Gastrocnemius medialis (tissue), 4 donors: ENCODE measurements at regions of chr1 and their contacts with region 1.

Region 1: GRCh38 chr1:227437495-227438008 is 119.3 kb upstream of the CDC42BPA start:
- DNase-seq: no peak
- ATAC-seq: peak; percentile 87 to 90
- H3K4me3 ChIP-seq: peak overlapping the region; percentile 46 to 61 (median 52)
- H3K27ac ChIP-seq: peak overlapping the region in 2 of 4 donors; percentile 11 to 59
- H3K4me1 ChIP-seq: peaks cover 11 to 27% of the 10 kb centered on the region in 2 donors
- H3K27me3 ChIP-seq: no peaks in the 10 kb centered on the region
- CTCF ChIP-seq: peak; percentile 9 to 55 (median 45)
- POLR2A ChIP-seq: no peak

Region 2: GRCh38 chr1:226608699-226609505 is 828.6 kb before region 1 on chr1:
- in situ Hi-C with region 1: loop called in 1 of 4 experiments (anchors 25 kb)
- intact Hi-C with region 1: no loop called
- DNase-seq: peak; percentile 23 to 41
- ATAC-seq: peak; percentile 37 to 60
- H3K4me3 ChIP-seq: no peak overlapping the region
- H3K27ac ChIP-seq: peak overlapping the region in 1 of 4 donors; percentile 7
- H3K4me1 ChIP-seq: peaks cover under 1 to 1% of the 10 kb centered on the region in 2 donors
- H3K27me3 ChIP-seq: peaks cover 0 to 6% (median 0%) of the 10 kb centered on the region in 3 donors
- CTCF ChIP-seq: peak; percentile 55 to 82 (median 74)
- POLR2A ChIP-seq: no peak

Region 3: DNA sequence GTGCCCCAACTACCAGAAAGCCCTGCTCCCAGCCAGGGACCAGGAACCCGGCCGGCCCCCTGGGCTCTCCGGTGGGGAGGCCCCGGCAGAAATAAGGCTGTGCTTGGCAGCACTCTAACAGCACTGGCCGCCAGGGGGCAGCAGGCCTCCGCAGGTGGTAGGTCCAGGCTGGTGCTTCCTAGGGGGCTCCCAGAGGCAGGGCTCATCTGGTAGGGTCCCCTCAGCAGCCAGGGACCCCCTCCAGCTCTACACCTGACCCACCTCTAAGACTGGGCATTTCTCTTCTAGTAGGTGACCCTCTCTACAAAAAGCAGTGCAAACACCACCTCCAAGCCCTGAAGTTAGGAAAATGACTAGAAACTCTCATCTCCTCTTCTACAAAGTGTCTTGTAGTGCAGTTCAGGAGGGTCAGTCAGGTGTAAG is 803.4 kb before region 1 on chr1:
- in situ Hi-C with region 1: loop called in 1 of 4 experiments (anchors 25 kb)
- intact Hi-C with region 1: loop called (anchors 5 kb)
- DNase-seq: peak; percentile 56 to 75
- ATAC-seq: peak; percentile 64 to 75
- H3K4me3 ChIP-seq: no peak overlapping the region
- H3K27ac ChIP-seq: peak overlapping the region; percentile 46 to 71 (median 66)
- H3K4me1 ChIP-seq: peaks cover 33 to 41% of the 10 kb centered on the region in 2 donors
- H3K27me3 ChIP-seq: no peaks in the 10 kb centered on the region
- CTCF ChIP-seq: peak; percentile 90 to 98 (median 98)
- POLR2A ChIP-seq: no peak

Region 4: GRCh38 chr1:226990133-226990716 is 447.3 kb before region 1 on chr1:
- in situ Hi-C with region 1: no loop called
- intact Hi-C with region 1: loop called (anchors 10 kb)
- DNase-seq: peak; percentile 41 to 65
- ATAC-seq: peak; percentile 26 to 36
- H3K4me3 ChIP-seq: no peak overlapping the region
- H3K27ac ChIP-seq: peak overlapping the region; percentile 89 to 99 (median 99)
- H3K4me1 ChIP-seq: peaks cover 40 to 47% of the 10 kb centered on the region in 2 donors
- H3K27me3 ChIP-seq: no peaks in the 10 kb centered on the region
- CTCF ChIP-seq: no peak
- POLR2A ChIP-seq: no peak

Region 5: DNA sequence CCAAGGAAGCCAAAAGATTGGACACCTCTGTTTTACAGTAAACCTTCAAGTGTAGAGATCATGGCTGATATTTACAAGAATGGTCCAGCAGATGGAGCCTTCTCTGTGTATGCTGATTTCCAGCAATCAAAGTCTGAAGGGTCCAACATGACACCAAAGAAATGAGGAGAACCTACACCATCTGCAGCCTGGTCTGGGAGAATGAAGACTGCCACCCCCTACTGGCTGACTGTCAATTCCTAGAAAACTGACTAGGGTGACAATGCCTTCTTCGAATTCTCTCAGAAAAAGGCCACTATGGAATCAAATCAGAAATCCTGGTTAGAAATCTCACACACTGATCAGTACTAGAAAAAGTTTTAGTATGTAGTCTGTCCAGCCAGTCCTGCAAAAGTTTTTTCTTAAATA is 202.6 kb before region 1 on chr1:
- in situ Hi-C with region 1: loop called (anchors 10 to 25 kb)
- intact Hi-C with region 1: loop called (anchors 1 kb)
- DNase-seq: no peak
- ATAC-seq: peak; percentile 49 to 65
- H3K4me3 ChIP-seq: no peak overlapping the region
- H3K27ac ChIP-seq: no peak overlapping the region
- H3K4me1 ChIP-seq: peaks cover 0 to 25% of the 10 kb centered on the region in 2 donors
- H3K27me3 ChIP-seq: no peaks in the 10 kb centered on the region
- CTCF ChIP-seq: peak; percentile 19 to 50 (median 31)
- POLR2A ChIP-seq: no peak

Region 6: DNA sequence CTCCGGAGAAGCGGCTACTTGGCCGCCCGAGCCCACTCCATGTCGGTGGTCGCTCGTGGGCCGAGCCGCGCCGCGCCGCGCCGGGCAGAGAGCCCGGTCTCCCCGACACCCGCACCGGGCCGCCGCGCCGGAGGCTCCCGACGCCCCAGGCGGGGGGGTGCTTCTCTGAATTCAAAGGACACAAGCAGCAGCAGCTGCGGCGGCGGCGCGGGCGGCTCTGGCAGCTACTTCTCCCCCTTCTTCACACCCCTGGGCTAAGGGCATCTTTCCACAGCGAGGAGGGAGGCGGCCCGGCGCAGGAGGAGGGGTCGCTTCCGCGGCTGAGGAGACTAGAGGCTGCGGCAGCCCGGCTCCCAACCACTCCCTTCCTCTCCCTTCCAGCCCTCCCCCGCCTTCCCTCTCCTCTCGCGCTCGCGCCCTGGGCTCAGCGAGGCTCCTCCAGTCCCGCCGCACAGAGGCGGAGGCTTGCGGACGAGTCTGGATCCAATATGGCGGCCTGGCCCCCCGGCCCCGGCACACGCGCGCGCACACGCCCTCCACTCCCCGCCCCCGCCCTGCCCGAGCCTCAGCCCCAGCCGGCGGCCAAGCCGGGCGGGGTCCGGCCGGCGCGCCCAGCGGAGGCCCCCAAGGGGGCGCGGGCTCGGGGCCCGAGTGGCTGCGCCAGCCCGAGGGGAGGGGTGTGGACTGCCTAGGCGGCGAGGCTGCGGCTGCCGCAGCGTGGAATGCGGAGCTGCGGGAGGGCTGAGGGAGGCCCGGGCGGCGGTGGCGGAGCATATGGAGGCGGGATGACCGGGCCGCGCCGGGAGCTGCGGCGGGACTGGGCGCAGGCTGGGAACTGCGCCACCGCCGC is 119.3 kb before region 1 on chr1 and contains the start of gene CDC42BPA:
- in situ Hi-C with region 1: no loop called
- intact Hi-C with region 1: loop called (anchors 10 kb)
- DNase-seq: peak; percentile 57 to 73
- ATAC-seq: peak; percentile 62 to 77
- H3K4me3 ChIP-seq: peak within 1 kb of the TSS; percentile 77 to 93 (median 86)
- H3K27ac ChIP-seq: peak within 1 kb of the TSS; percentile 92 to 97 (median 94)
- H3K4me1 ChIP-seq: peaks cover 5 to 14% of the 10 kb centered on the region in 2 donors
- H3K27me3 ChIP-seq: no peaks in the 10 kb centered on the region
- CTCF ChIP-seq: no peak
- POLR2A ChIP-seq: peak; percentile 35 to 39
- total RNA-seq, gene CDC42BPA: 13.9 to 30.6 (median 16.6) TPM